ENCODE measurements at regions of chr1 and their contacts with region 1.

Region 1: DNA sequence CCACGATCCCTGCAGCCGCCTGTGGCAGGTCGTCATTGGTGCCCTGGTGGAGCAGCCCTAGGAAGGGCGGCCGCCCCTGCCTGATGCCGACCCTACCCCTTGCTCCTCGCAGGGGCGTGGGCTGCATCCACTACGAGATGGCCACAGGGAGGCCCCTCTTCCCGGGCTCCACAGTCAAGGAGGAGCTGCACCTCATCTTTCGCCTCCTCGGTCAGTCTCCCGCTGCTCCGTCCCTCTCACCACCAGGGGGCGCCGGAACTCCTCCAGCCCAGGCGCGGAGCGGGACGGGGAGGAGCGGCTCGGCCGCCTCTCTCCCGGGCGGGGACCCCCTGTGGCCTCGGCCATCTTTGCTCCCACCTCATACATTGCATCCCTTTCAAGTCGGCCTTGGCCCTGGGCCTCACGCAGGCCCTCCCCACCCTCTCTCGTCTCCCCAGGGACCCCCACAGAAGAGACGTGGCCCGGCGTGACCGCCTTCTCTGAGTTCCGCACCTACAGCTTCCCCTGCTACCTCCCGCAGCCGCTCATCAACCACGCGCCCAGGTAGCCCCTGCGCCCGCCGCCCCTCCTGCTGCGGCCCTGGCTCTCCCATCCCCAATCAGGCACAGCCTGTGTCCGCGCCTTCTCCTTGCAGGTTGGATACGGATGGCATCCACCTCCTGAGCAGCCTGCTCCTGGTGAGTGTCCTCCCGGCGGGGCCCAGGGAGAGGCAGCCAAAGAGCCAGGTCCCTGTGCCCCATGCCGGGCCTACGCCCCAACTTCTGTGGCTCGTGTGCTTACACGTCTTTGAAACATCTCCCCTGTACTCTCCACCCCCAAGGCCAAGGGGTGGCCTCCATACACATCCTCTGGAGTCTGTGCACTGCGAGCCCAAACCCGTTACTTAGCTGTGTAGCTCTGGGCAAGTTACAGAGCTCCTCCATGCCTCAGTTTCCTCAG is 24.7 kb downstream of the CDK18 start:
- DNase-seq: peak; percentile 77 to 90 (median 82)
- ATAC-seq: peak; percentile 31 to 75 (median 60)
- H3K4me3 ChIP-seq: peak overlapping the region in 9 of 12 donors; percentile 21 to 50 (median 46)
- H3K27ac ChIP-seq: peak overlapping the region in 2 of 12 donors; percentile 36 to 53
- H3K4me1 ChIP-seq: peaks cover 0 to 34% (median 18%) of the 10 kb centered on the region in 12 donors
- H3K27me3 ChIP-seq: no peaks in the 10 kb centered on the region
- CTCF ChIP-seq: peak; percentile 90 to 98 (median 94)
- POLR2A ChIP-seq: no peak

Region 2: GRCh38 chr1:205273551-205273982 is 255.6 kb before region 1 on chr1:
- intact Hi-C with region 1: loop called in 1 of 10 experiments (anchors 10 kb)
- DNase-seq: peak; percentile 75 to 90 (median 80)
- ATAC-seq: peak; percentile 70 to 87 (median 78)
- H3K4me3 ChIP-seq: no peak overlapping the region
- H3K27ac ChIP-seq: no peak overlapping the region
- H3K4me1 ChIP-seq: peaks cover 0 to 33% (median 11%) of the 10 kb centered on the region in 12 donors
- H3K27me3 ChIP-seq: no peaks in the 10 kb centered on the region
- CTCF ChIP-seq: peak; percentile 93 to 99 (median 99)
- POLR2A ChIP-seq: no peak

Region 3: GRCh38 chr1:205568469-205569361 is 39.6 kb after region 1 on chr1:
- intact Hi-C with region 1: loop called in 3 of 10 experiments (anchors 5 kb)
- DNase-seq: peak in 1 of 5 donors; percentile 24
- ATAC-seq: peak in 3 of 4 donors; percentile 23 to 30 (median 27)
- H3K4me3 ChIP-seq: peak overlapping the region in 11 of 12 donors; percentile 22 to 62 (median 47)
- H3K27ac ChIP-seq: peak overlapping the region in 2 of 12 donors; percentile 31 to 34
- H3K4me1 ChIP-seq: peaks cover 0 to 17% (median 0%) of the 10 kb centered on the region in 12 donors
- H3K27me3 ChIP-seq: peaks cover 4 to 38% (median 15%) of the 10 kb centered on the region in 9 donors
- CTCF ChIP-seq: peak in 6 of 12 donors; percentile 16 to 37 (median 29)
- POLR2A ChIP-seq: no peak

Region 4: GRCh38 chr1:205584732-205585131 is 55.6 kb after region 1 on chr1:
- intact Hi-C with region 1: loop called in 5 of 10 experiments (anchors 5 kb)
- DNase-seq: no peak
- ATAC-seq: no peak
- H3K4me3 ChIP-seq: no peak overlapping the region
- H3K27ac ChIP-seq: no peak overlapping the region
- H3K4me1 ChIP-seq: peaks cover 0 to 20% (median 12%) of the 10 kb centered on the region in 12 donors
- H3K27me3 ChIP-seq: peaks cover 0 to 13% (median 0%) of the 10 kb centered on the region in 9 donors
- CTCF ChIP-seq: peak in 9 of 12 donors; percentile 12 to 42 (median 29)
- POLR2A ChIP-seq: no peak

Region 5: DNA sequence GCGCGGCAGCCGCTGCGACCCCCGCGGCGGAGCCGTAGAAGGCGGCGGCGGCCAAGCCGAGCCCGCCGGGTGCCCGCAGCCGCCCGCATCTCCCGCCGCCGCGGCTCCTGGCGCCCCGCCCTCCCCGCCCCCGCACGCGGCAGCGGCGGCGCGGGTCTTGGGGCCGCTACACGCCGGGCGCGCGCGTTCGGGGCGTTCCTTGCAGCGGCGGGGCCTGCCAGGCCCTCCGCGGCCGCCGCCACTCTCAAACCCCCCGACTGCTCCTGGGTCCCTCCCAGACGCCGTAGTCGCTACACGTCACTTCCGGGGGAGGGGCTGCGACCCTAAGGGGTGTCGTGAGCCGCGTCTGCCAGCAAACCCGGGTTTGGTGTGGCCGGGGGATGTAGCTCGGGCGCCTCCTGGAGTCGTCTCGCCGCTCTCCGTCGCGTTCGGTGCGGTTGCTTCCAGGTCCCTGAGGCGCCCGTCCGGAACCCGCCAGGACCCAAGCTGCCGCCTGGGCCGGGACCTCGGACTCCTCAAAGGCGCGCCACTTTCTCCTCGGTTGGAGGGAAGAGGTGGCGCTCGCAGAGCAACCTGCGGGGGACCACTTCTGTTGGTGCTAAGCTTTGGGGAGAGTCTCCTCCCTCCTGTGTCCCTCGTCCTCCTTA is 102.7 kb after region 1 on chr1 and contains the start of gene ELK4:
- intact Hi-C with region 1: loop called in 7 of 10 experiments (anchors 2 to 10 kb)
- DNase-seq: peak; percentile 99 to 100 (median 99)
- ATAC-seq: peak; percentile 99 to 100 (median 99)
- H3K4me3 ChIP-seq: peak within 1 kb of the TSS; percentile 47 to 88 (median 74)
- H3K27ac ChIP-seq: peak within 1 kb of the TSS; percentile 89 to 97 (median 95)
- H3K4me1 ChIP-seq: peaks cover 4 to 50% (median 22%) of the 10 kb centered on the region in 12 donors
- H3K27me3 ChIP-seq: no peaks in the 10 kb centered on the region
- CTCF ChIP-seq: peak; percentile 67 to 92 (median 76)
- POLR2A ChIP-seq: peak in 1 of 2 donors; percentile 97
- total RNA-seq, gene ELK4: 18.5 to 54.9 (median 36.5) TPM

Region 6: DNA sequence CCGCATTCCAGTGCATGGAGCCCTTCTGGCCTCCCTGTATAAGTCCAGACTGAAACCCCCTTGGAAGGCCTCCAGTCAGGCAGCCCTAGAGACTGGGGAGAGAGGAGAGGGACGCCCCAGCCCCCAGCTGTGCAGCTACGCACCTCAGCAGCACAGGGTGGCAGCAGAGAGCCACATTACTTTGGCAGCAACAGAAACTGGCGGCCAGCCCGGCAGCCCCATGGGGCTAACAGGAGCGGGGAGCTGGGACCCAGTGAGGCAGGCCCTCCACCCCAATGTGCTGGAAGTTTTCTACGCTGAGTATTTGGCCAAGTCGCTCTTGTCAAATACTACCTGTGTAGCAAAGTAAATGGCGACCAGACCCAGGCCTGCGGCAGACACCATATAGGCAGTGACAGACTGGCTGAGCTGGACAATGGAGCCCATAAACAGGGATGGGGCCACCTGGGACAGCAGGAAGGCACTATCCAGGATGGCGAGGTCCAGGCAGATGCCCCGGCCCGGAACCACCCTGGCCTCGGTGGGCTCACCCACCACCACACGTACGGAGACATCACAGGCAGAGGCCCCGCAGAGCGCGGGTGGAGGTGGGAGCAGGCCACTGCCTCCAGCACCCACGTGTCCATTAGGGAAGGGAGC is 129.9 kb after region 1 on chr1:
- intact Hi-C with region 1: loop called (anchors 1 to 5 kb)
- DNase-seq: peak; percentile 78 to 90 (median 83)
- ATAC-seq: peak; percentile 71 to 88 (median 80)
- H3K4me3 ChIP-seq: no peak overlapping the region
- H3K27ac ChIP-seq: no peak overlapping the region
- H3K4me1 ChIP-seq: peaks cover 0 to 16% (median 6%) of the 10 kb centered on the region in 12 donors
- H3K27me3 ChIP-seq: no peaks in the 10 kb centered on the region
- CTCF ChIP-seq: peak; percentile 77 to 91 (median 85)
- POLR2A ChIP-seq: no peak

Region 7: DNA sequence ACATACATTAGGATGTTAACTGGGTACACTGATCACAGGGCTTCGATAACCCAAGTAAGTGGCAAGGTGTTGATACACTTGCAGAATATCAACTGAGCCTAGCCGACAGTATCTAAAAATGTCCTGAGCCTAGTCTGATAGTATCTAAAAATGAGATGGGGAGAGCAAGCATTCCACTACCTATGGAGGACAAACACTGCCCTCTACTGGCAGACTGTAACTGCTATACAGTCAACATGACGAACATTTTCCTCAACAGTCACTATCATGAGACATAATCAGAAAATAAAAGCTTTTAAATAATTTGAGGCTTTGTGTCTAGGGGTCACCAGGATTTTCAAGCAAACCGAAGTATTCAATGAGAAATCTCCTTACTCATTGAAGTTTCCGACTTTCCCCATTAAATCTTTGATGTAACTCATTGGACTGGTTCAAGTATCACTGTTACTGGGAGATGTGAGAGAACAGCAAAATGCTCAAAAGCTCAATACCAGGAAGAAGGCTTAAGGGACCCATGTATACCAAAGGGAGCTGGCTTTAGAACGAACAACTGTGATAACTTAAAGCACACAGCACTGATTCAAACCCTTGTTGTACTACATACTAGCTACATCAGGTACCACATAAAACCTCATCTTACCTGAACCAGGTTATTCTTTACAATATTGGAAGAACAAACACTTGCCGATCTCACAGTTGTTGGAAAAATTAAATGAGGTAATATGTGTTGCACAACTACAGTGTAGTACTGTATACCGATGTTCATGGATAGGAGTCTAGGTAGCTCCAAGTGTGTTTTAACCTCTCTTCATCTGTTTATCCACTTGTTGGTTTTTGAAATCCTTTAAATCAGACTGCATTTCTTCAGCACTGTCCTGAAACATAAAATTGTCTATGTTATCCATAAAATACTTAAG is 182.2 kb after region 1 on chr1:
- intact Hi-C with region 1: no loop called
- DNase-seq: peak in 4 of 5 donors; percentile 40 to 70 (median 62)
- ATAC-seq: peak; percentile 43 to 83 (median 80)
- H3K4me3 ChIP-seq: no peak overlapping the region
- H3K27ac ChIP-seq: no peak overlapping the region
- H3K4me1 ChIP-seq: peaks cover 0 to 28% (median 10%) of the 10 kb centered on the region in 12 donors
- H3K27me3 ChIP-seq: no peaks in the 10 kb centered on the region
- CTCF ChIP-seq: peak; percentile 77 to 95 (median 88)
- POLR2A ChIP-seq: no peak